AG04450 (cell line): ENCODE measurements at regions of chr17 and their contacts with region 1.

Region 1: GRCh38 chr17:75173526-75173925 is 9.2 kb downstream of the SUMO2 start:
- DNase-seq: no peak
- H3K4me3 ChIP-seq: no peak overlapping the region
- H3K27ac ChIP-seq: no peak overlapping the region
- H3K27me3 ChIP-seq: no peaks in the 10 kb centered on the region
- CTCF ChIP-seq: no peak

Region 2: GRCh38 chr17:74431568-74432483 is 741.7 kb before region 1 on chr17 and contains the start of gene GPRC5C:
- CTCF ChIA-PET with region 1: no interaction called
- POLR2A ChIA-PET with region 1: no interaction called
- DNase-seq: no peak
- H3K4me3 ChIP-seq: no peak within 1 kb of the TSS
- H3K27ac ChIP-seq: no peak within 1 kb of the TSS
- H3K27me3 ChIP-seq: peaks cover 22% of the 10 kb centered on the region
- CTCF ChIP-seq: no peak
- polyA plus RNA-seq, gene GPRC5C: 0.14 TPM in 1 of 2 replicates, not detected in the other

Region 3: GRCh38 chr17:75124041-75124818 is 49.3 kb before region 1 on chr17:
- CTCF ChIA-PET with region 1: interaction called, 12 read pairs
- POLR2A ChIA-PET with region 1: no interaction called
- DNase-seq: no peak
- H3K4me3 ChIP-seq: no peak overlapping the region
- H3K27ac ChIP-seq: peak overlapping the region; percentile 11
- H3K27me3 ChIP-seq: no peaks in the 10 kb centered on the region
- CTCF ChIP-seq: no peak

Region 4: GRCh38 chr17:75159191-75160031 is 14.1 kb before region 1 on chr17:
- CTCF ChIA-PET with region 1: interaction called, 13 read pairs
- POLR2A ChIA-PET with region 1: interaction called, 3 read pairs
- DNase-seq: no peak
- H3K4me3 ChIP-seq: no peak overlapping the region
- H3K27ac ChIP-seq: peak overlapping the region; percentile 47
- H3K27me3 ChIP-seq: no peaks in the 10 kb centered on the region
- CTCF ChIP-seq: no peak

Region 5: GRCh38 chr17:75205037-75205792 is 31.7 kb after region 1 on chr17 and contains the start of gene NUP85:
- CTCF ChIA-PET with region 1: interaction called, 12 read pairs
- POLR2A ChIA-PET with region 1: interaction called, 8 read pairs
- DNase-seq: peak; percentile 79
- H3K4me3 ChIP-seq: peak within 1 kb of the TSS; percentile 100
- H3K27ac ChIP-seq: peak within 1 kb of the TSS; percentile 99
- H3K27me3 ChIP-seq: no peaks in the 10 kb centered on the region
- CTCF ChIP-seq: no peak
- polyA plus RNA-seq, gene NUP85: 31.5 and 33.3 TPM in 2 replicates

Region 6: GRCh38 chr17:75295201-75296158 is 122.0 kb after region 1 on chr17:
- CTCF ChIA-PET with region 1: no interaction called
- POLR2A ChIA-PET with region 1: no interaction called
- DNase-seq: no peak
- H3K4me3 ChIP-seq: no peak overlapping the region
- H3K27ac ChIP-seq: no peak overlapping the region
- H3K27me3 ChIP-seq: no peaks in the 10 kb centered on the region
- CTCF ChIP-seq: no peak